HCT116 (cell line): ENCODE measurements at regions of chr7 and their contacts with region 1.

Region 1: DNA sequence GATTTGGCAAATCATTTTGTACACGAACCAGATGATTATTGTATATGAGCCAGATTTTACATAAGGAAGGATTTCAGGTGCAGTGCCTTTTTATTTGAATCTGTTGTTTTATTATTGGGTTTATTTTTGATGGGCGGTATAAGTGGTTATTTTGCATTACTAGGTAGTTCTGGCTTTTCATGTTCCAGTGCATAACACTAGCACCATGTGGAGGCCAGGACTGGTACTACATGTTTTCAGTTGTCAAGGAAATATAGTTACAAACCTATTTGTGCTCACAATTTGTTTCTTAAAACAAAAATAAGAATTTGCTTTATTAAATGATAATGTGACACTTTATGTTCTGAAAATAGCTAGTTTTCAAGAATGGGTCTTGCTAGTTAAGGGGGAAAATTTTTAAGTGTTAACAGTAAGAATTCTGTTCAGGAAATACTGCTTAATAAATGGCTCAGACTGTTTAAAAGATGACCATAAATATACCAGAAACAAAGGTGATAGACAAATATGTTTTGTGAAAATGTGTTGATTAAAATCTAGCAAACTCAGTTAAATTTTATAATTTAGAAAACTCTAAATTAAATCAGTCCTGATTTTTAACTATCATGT is 7.1 kb upstream of the SEMA3E start:
- DNase-seq: peak; percentile 50
- ATAC-seq: peak; percentile 76; the same call in 1 of the 2 replicates
- H3K4me3 ChIP-seq: no peak overlapping the region
- H3K27ac ChIP-seq: no peak overlapping the region
- H3K4me1 ChIP-seq: no peaks in the 10 kb centered on the region
- H3K27me3 ChIP-seq: no peaks in the 10 kb centered on the region
- CTCF ChIP-seq: peak; percentile 72 to 90 (median 79); a peak in 5 of 6 replicates
- POLR2A ChIP-seq: no peak
- RAD21 ChIP-seq: peak; percentile 90

Region 2: DNA sequence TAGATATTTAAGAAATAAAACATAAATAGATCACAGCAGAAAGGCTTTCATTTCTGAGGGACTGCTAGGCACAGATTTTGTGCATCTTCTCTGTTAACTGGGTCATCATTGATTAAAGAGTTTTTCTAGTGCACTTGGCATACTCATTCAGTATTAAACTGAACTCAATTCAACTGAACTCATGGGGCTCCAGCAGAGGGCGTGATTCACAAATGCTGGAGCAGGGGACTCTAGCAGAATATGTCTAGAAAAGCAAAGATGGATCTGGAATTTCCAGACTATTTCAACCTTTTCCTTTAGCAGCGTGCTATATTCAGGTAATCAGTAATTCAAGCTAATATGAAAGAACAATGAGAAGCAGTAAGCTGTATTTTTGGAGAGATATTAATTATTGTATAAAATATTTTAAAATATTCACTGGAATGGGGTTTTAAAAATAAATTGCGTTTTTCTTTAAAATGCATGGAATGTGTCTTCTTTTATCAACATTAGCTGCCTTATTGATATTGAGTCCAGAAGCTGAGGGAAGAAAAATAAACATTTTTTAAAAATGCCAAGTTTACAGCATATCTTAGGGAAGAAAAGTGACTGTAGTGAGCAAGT is 915.7 kb before region 1 on chr7:
- CTCF ChIA-PET with region 1: no interaction called
- POLR2A ChIA-PET with region 1: no interaction called
- RAD21 ChIA-PET with region 1: no interaction called
- intact Hi-C with region 1: loop called (anchors 10 kb)
- DNase-seq: peak; percentile 50
- ATAC-seq: peak; percentile 82
- H3K4me3 ChIP-seq: no peak overlapping the region
- H3K27ac ChIP-seq: no peak overlapping the region
- H3K4me1 ChIP-seq: no peaks in the 10 kb centered on the region
- H3K27me3 ChIP-seq: no peaks in the 10 kb centered on the region
- CTCF ChIP-seq: peak; percentile 64 to 83 (median 80); a peak in 5 of 6 replicates
- POLR2A ChIP-seq: no peak
- RAD21 ChIP-seq: peak; percentile 75

Region 3: GRCh38 chr7:82810558-82811259 is 845.3 kb before region 1 on chr7:
- CTCF ChIA-PET with region 1: no interaction called
- POLR2A ChIA-PET with region 1: no interaction called
- RAD21 ChIA-PET with region 1: no interaction called
- intact Hi-C with region 1: loop called (anchors 2 kb)
- DNase-seq: peak; percentile 45
- ATAC-seq: peak; percentile 89
- H3K4me3 ChIP-seq: no peak overlapping the region
- H3K27ac ChIP-seq: no peak overlapping the region
- H3K4me1 ChIP-seq: peaks cover 0 to 3% of the 10 kb centered on the region in 2 experiments; a peak in 2 of 4 replicates
- H3K27me3 ChIP-seq: no peaks in the 10 kb centered on the region
- CTCF ChIP-seq: peak; percentile 48 to 76 (median 64); a peak in 5 of 6 replicates
- POLR2A ChIP-seq: no peak
- RAD21 ChIP-seq: peak; percentile 66

Region 4: GRCh38 chr7:83365746-83366145 is 290.3 kb before region 1 on chr7:
- CTCF ChIA-PET with region 1: no interaction called
- POLR2A ChIA-PET with region 1: no interaction called
- RAD21 ChIA-PET with region 1: no interaction called
- intact Hi-C with region 1: loop called (anchors 1 kb)
- DNase-seq: no peak
- ATAC-seq: no peak
- H3K4me3 ChIP-seq: no peak overlapping the region
- H3K27ac ChIP-seq: no peak overlapping the region
- H3K4me1 ChIP-seq: no peaks in the 10 kb centered on the region
- H3K27me3 ChIP-seq: no peaks in the 10 kb centered on the region
- CTCF ChIP-seq: peak; percentile 19 to 43 (median 23); a peak in 2 of 6 replicates
- POLR2A ChIP-seq: no peak
- RAD21 ChIP-seq: peak; percentile 52

Region 5: DNA sequence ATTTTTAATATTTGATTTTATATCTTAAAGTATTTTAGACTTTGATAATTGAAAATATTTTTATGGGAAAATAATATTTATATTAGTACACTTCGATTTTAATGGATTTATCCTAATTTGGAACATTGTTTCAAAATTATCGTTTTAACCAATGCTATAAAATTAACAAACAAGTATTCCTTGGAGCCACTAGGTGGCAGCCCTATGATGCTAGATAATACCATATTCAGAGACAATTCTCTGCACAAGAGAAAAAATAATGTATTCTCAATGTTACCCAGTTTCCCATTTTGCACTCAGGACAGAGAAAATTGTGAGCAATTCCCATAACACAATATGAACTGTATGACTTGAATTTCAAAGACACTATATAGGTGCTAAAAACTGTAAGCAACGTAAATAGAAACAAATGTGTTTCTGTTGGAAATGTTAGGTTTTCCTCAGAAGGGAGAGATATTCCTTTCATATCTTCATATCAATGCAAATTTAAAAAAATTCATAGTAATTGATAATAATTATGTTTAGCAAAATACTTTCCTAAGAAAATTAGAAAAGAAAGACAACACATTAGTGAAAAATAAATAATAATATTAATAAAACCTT is 245.0 kb before region 1 on chr7:
- CTCF ChIA-PET with region 1: interaction called, 5 read pairs
- POLR2A ChIA-PET with region 1: no interaction called
- RAD21 ChIA-PET with region 1: no interaction called
- intact Hi-C with region 1: loop called (anchors 1 kb)
- DNase-seq: peak; percentile 36
- ATAC-seq: peak; percentile 52
- H3K4me3 ChIP-seq: no peak overlapping the region
- H3K27ac ChIP-seq: no peak overlapping the region
- H3K4me1 ChIP-seq: no peaks in the 10 kb centered on the region
- H3K27me3 ChIP-seq: no peaks in the 10 kb centered on the region
- CTCF ChIP-seq: peak; percentile 52 to 74 (median 72); a peak in 5 of 6 replicates
- POLR2A ChIP-seq: no peak
- RAD21 ChIP-seq: peak; percentile 76

Region 6: DNA sequence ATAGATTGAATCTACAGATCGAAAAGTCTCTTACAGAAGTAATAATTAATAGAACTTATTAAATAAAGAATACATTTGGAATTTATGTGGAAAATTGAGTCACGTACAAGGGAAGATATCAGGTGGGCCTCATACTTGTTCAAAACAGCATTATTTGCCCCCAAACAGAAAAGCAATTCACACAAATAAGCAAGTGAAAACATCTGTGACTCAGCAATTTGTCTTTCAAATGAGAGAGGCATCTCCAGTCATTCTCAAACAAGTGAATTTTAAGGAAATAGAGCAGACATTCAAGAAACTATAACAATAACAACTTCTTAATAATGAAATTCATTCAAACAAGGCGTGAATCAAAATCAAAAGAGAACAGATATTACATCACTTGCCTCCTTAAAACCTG is 488.4 kb after region 1 on chr7:
- CTCF ChIA-PET with region 1: no interaction called
- POLR2A ChIA-PET with region 1: no interaction called
- RAD21 ChIA-PET with region 1: no interaction called
- intact Hi-C with region 1: no loop called
- DNase-seq: no peak
- ATAC-seq: no peak
- H3K4me3 ChIP-seq: no peak overlapping the region
- H3K27ac ChIP-seq: no peak overlapping the region
- H3K4me1 ChIP-seq: peaks cover 0 to 2% of the 10 kb centered on the region in 2 experiments; a peak in 1 of 4 replicates
- H3K27me3 ChIP-seq: no peaks in the 10 kb centered on the region
- CTCF ChIP-seq: no peak
- POLR2A ChIP-seq: no peak
- RAD21 ChIP-seq: no peak